Transverse colon (tissue), 4 donors: ENCODE measurements at regions of chr7 and their contacts with region 1.

Region 1: DNA sequence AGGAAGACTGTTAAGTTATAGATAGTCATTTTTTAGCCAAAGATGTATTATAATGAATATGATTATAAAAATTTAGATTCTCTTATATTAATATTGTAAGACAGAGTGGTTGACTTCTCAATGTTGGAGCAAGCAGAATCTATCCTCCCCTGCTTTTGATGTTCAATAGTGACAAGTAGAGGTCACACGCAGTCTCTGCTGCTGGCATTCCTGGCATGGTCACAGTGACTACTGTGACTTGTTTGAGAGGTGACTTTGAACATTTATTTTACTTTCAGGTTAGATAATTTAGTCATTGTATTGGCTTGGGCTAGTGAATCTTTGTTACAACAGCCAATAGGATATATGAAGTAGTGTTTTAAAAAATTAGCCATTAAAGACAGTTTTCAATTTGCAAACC is 13.7 kb upstream of the CD36 start:
- DNase-seq: no peak
- H3K4me3 ChIP-seq: no peak overlapping the region
- H3K27ac ChIP-seq: no peak overlapping the region
- H3K4me1 ChIP-seq: no peaks in the 10 kb centered on the region
- H3K27me3 ChIP-seq: no peaks in the 10 kb centered on the region
- CTCF ChIP-seq: no peak
- EP300 ChIP-seq: no peak
- POLR2A ChIP-seq: no peak

Region 2: GRCh38 chr7:81420526-81421226 is 795.9 kb after region 1 on chr7:
- in situ Hi-C with region 1: no loop called
- intact Hi-C with region 1: loop called (anchors 5 kb)
- DNase-seq: no peak
- H3K4me3 ChIP-seq: no peak overlapping the region
- H3K27ac ChIP-seq: no peak overlapping the region
- H3K4me1 ChIP-seq: peaks cover 0 to 3% (median 0%) of the 10 kb centered on the region in 4 donors
- H3K27me3 ChIP-seq: no peaks in the 10 kb centered on the region
- CTCF ChIP-seq: no peak
- EP300 ChIP-seq: no peak
- POLR2A ChIP-seq: no peak